ENCODE measurements at regions of chr3 and their contacts with region 1.

Region 1: GRCh38 chr3:73846951-73847350 is 222.2 kb upstream of the PDZRN3 start:
- DNase-seq: no peak
- ATAC-seq: no peak
- H3K4me3 ChIP-seq: no peak overlapping the region
- H3K4me3 Mint-ChIP-seq: no peak overlapping the region
- H3K27ac ChIP-seq: no peak overlapping the region
- H3K27ac Mint-ChIP-seq: no peak overlapping the region
- H3K4me1 ChIP-seq: no peaks in the 10 kb centered on the region
- H3K4me1 Mint-ChIP-seq: no peaks in the 10 kb centered on the region
- H3K27me3 ChIP-seq: no peaks in the 10 kb centered on the region
- H3K27me3 Mint-ChIP-seq: no peaks in the 10 kb centered on the region

Region 2: GRCh38 chr3:73705792-73706191 is 141.2 kb before region 1 on chr3:
- CTCF ChIA-PET with region 1: interaction called in 1 of 2 experiments, 10 read pairs
- POLR2A ChIA-PET with region 1: no interaction called
- DNase-seq: no peak
- ATAC-seq: no peak
- H3K4me3 ChIP-seq: no peak overlapping the region
- H3K4me3 Mint-ChIP-seq: no peak overlapping the region
- H3K27ac ChIP-seq: no peak overlapping the region
- H3K27ac Mint-ChIP-seq: no peak overlapping the region
- H3K4me1 ChIP-seq: no peaks in the 10 kb centered on the region
- H3K4me1 Mint-ChIP-seq: no peaks in the 10 kb centered on the region
- H3K27me3 ChIP-seq: no peaks in the 10 kb centered on the region
- H3K27me3 Mint-ChIP-seq: no peaks in the 10 kb centered on the region

Region 3: DNA sequence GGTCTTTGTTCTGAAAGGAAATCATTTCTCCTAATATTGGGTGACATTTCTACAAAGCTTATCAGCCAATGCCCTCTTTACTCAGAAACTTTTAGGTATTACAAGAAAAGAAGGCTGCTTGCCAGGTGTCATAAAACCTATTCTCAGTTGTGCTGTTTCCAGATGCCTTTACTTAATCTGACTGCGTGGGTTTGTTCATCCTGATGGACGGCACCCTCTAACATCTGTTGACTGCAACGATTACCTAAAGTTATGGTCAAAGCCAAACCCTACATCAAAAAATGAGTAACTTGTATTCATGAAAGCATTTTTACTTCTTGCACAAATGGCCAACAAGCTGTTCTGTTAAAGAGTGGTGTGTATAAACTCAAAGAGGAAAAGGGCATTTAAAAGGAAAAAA is 14.5 kb before region 1 on chr3:
- CTCF ChIA-PET with region 1: no interaction called
- POLR2A ChIA-PET with region 1: no interaction called
- DNase-seq: no peak
- ATAC-seq: no peak
- H3K4me3 ChIP-seq: no peak overlapping the region
- H3K4me3 Mint-ChIP-seq: no peak overlapping the region
- H3K27ac ChIP-seq: no peak overlapping the region
- H3K27ac Mint-ChIP-seq: no peak overlapping the region
- H3K4me1 ChIP-seq: no peaks in the 10 kb centered on the region
- H3K4me1 Mint-ChIP-seq: no peaks in the 10 kb centered on the region
- H3K27me3 ChIP-seq: no peaks in the 10 kb centered on the region
- H3K27me3 Mint-ChIP-seq: no peaks in the 10 kb centered on the region

Region 4: GRCh38 chr3:74124782-74125181 is 277.8 kb after region 1 on chr3:
- CTCF ChIA-PET with region 1: no interaction called
- POLR2A ChIA-PET with region 1: no interaction called
- DNase-seq: no peak
- ATAC-seq: no peak
- H3K4me3 ChIP-seq: no peak overlapping the region
- H3K4me3 Mint-ChIP-seq: no peak overlapping the region
- H3K27ac ChIP-seq: no peak overlapping the region
- H3K27ac Mint-ChIP-seq: no peak overlapping the region
- H3K4me1 ChIP-seq: no peaks in the 10 kb centered on the region
- H3K4me1 Mint-ChIP-seq: no peaks in the 10 kb centered on the region
- H3K27me3 ChIP-seq: no peaks in the 10 kb centered on the region
- H3K27me3 Mint-ChIP-seq: no peaks in the 10 kb centered on the region